ENCODE measurements at regions of chr7 and their contacts with region 1.

Region 1: DNA sequence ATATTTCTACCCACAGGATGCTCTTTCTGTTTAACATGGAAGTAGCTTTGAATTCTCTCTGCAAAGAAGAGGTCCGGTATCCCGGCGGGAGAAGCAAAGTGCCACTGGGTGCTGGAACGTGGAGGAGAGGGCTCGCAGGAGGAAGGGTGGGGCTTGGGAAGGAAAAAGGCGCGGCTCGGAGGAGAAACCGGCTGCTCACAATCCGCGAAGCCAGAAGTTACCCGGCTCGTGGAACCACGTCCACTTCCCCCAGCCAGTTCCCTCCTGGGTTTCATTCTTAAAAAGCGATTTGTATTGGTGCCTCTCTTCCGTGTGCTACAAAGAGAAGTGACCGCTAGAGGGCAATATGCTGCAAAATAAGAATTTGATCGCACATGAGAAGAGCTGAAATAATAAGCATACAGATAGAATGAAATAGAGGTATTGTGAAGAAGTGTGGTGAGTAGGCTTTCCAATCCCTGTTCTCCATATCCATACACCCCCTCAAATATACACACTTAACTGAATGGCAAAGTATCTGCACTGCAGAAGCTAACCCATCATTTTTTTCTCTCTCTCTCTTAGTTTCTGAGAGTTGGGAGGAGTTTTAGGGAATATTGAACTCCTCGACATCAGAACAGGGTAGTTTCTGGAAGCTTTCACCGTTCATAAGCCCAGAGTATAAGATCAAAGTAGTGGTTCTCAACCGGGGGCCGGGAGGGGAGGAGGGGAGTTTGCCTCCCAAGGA is 31.1 kb downstream of the TRIL start:
- DNase-seq: peak; percentile 64
- H3K4me3 Mint-ChIP-seq: peak overlapping the region; percentile 75
- H3K27ac Mint-ChIP-seq: no peak overlapping the region
- H3K4me1 Mint-ChIP-seq: peaks cover 21% of the 10 kb centered on the region
- H3K27me3 Mint-ChIP-seq: peaks cover 2% of the 10 kb centered on the region

Region 2: GRCh38 chr7:28955718-28956619 is 28.9 kb after region 1 on chr7:
- CTCF ChIA-PET with region 1: interaction called, 72 read pairs
- intact Hi-C with region 1: loop called (anchors 1 kb)
- DNase-seq: peak; percentile 50
- H3K4me3 Mint-ChIP-seq: no peak overlapping the region
- H3K27ac Mint-ChIP-seq: no peak overlapping the region
- H3K4me1 Mint-ChIP-seq: peaks cover 10% of the 10 kb centered on the region
- H3K27me3 Mint-ChIP-seq: peaks cover 50% of the 10 kb centered on the region

Region 3: GRCh38 chr7:29091715-29092114 is 164.7 kb after region 1 on chr7:
- CTCF ChIA-PET with region 1: interaction called, 45 read pairs
- intact Hi-C with region 1: no loop called
- DNase-seq: peak; percentile 21
- H3K4me3 Mint-ChIP-seq: peak overlapping the region; percentile 78
- H3K27ac Mint-ChIP-seq: peak overlapping the region; percentile 86
- H3K4me1 Mint-ChIP-seq: peaks cover 13% of the 10 kb centered on the region
- H3K27me3 Mint-ChIP-seq: peaks cover 3% of the 10 kb centered on the region

Region 4: DNA sequence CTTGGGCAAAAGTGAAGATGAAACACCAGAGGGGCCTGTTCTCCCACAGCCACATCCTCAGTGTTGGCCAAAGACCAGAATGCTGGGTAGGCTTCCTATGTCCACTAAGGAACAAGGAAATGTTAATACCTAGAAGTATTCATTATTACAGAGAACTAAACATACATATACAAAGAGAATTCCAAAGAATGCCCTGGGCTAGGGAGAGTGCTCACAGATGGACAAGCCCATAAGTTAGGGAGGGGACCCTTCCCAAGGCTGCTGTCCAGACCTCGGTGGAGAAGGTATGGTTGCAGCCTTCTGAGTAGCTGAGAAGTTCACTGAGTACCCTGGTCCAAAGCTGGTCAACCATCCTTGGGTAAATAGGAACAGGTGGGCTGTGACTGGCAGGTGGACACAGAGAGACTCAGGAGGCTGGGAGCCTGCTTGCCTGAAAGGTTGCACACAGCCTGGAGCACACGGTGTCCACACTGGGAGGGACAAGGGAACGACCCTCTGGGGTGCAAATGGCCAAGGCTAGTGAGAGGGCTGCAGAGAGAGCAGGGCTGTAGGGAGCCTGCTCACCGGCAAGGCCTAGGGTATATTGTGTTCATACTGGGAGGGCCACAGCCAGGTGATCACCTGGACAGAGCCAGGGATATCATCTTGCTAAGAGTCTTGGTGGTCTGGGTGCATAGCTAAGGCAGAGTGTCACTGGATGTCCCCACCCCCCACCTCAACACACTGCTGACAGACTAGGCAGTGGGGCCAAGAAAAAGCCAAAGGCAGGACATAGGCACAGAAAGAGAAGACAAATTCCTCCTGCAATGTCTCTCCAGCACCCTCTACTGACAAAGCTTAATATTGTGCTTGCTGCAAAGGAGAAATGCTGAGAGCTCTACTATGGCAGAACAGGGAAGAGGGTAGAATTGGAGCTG is 179.0 kb after region 1 on chr7:
- CTCF ChIA-PET with region 1: interaction called, 99 read pairs
- intact Hi-C with region 1: loop called (anchors 1 kb)
- DNase-seq: peak; percentile 37
- H3K4me3 Mint-ChIP-seq: no peak overlapping the region
- H3K27ac Mint-ChIP-seq: no peak overlapping the region
- H3K4me1 Mint-ChIP-seq: peaks cover 5% of the 10 kb centered on the region
- H3K27me3 Mint-ChIP-seq: peaks cover 6% of the 10 kb centered on the region

Region 5: GRCh38 chr7:29189743-29190201 is 262.7 kb after region 1 on chr7:
- CTCF ChIA-PET with region 1: interaction called, 14 read pairs
- intact Hi-C with region 1: no loop called
- DNase-seq: peak; percentile 63
- H3K4me3 Mint-ChIP-seq: no peak overlapping the region
- H3K27ac Mint-ChIP-seq: no peak overlapping the region
- H3K4me1 Mint-ChIP-seq: peaks cover 4% of the 10 kb centered on the region
- H3K27me3 Mint-ChIP-seq: peaks cover 30% of the 10 kb centered on the region

Region 6: GRCh38 chr7:29345600-29345999 is 418.6 kb after region 1 on chr7:
- CTCF ChIA-PET with region 1: interaction called, 4 read pairs
- intact Hi-C with region 1: loop called (anchors 5 kb)
- DNase-seq: peak; percentile 22
- H3K4me3 Mint-ChIP-seq: no peak overlapping the region
- H3K27ac Mint-ChIP-seq: no peak overlapping the region
- H3K4me1 Mint-ChIP-seq: no peaks in the 10 kb centered on the region
- H3K27me3 Mint-ChIP-seq: peaks cover 3% of the 10 kb centered on the region

Region 7: GRCh38 chr7:29408841-29409243 is 481.8 kb after region 1 on chr7:
- CTCF ChIA-PET with region 1: interaction called, 93 read pairs
- intact Hi-C with region 1: loop called (anchors 1 kb)
- DNase-seq: peak; percentile 70
- H3K4me3 Mint-ChIP-seq: no peak overlapping the region
- H3K27ac Mint-ChIP-seq: no peak overlapping the region
- H3K4me1 Mint-ChIP-seq: no peaks in the 10 kb centered on the region
- H3K27me3 Mint-ChIP-seq: no peaks in the 10 kb centered on the region